ENCODE measurements at regions of chr12 and their contacts with region 1.

Region 1: GRCh38 chr12:116880817-116881324 is 370 bp downstream of the HRK start:
- DNase-seq: no peak

Region 2: GRCh38 chr12:116703214-116703795 is 177.6 kb before region 1 on chr12:
- intact Hi-C with region 1: loop called (anchors 5 kb)
- DNase-seq: peak; percentile 86

Region 3: DNA sequence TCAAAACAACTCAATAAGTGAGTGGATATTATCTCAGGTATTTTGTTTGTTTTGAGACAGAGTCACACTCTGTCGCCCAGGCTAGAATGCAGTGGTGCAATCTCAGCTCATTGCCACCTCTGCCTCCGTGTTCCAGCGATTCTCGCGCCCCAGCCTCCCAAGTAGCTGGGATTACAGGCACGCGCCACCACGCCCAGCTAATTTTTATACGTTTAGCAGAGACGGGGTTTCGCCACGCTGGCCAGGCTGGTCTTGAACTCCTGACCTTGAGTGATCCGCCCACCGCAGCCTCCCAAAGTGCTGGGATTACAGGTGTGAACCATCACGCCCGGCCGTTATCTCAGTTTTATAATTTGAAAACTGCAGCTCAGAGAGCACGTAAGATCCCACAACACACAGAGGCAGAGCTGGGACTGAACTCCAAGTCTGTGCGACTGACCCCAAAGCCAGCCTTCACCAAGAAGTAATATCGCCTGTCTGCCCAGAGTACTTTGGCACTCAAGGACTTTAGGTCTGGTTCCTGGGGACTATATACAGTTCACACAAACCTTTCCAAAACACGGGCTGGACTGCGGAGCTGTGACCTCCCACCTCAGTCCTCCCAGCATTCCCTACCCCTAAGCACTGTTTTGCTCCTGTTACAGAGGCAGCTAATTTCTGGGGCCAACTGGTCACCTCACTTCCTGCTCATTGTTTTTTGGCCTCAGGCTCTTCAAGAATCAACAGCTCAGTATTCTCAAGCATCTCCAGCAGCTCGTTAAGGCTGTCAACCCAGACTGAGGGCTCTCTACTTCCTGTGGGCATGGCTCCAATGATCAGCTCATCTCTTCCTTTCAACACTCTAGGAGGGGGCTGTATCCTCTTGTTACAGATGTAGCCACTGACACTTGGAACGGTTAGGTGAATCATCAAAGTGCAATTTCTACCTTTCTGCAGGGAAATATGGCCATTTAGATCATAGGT is 195.8 kb after region 1 on chr12:
- intact Hi-C with region 1: no loop called
- DNase-seq: no peak

Measured in cardiac septum (tissue), 1 donor.